ENCODE measurements at regions of chr6 and their contacts with region 1.

Region 1: GRCh38 chr6:157021344-157021992 is 244.3 kb downstream of the ARID1B start:
- DNase-seq: peak; percentile 85 to 93 (median 91)
- ATAC-seq: peak; percentile 90
- H3K4me3 ChIP-seq: peak overlapping the region; percentile 79
- H3K4me3 Mint-ChIP-seq: peak overlapping the region; percentile 76 to 98 (median 95)
- H3K27ac ChIP-seq: peak overlapping the region; percentile 100
- H3K27ac Mint-ChIP-seq: peak overlapping the region; percentile 86 to 100 (median 99)
- H3K4me1 ChIP-seq: peaks cover 5 to 21% of the 10 kb centered on the region in 2 donors
- H3K4me1 Mint-ChIP-seq: peaks cover 32 to 82% (median 64%) of the 10 kb centered on the region in 7 donors
- H3K27me3 ChIP-seq: no peaks in the 10 kb centered on the region
- H3K27me3 Mint-ChIP-seq: no peaks in the 10 kb centered on the region

Region 2: DNA sequence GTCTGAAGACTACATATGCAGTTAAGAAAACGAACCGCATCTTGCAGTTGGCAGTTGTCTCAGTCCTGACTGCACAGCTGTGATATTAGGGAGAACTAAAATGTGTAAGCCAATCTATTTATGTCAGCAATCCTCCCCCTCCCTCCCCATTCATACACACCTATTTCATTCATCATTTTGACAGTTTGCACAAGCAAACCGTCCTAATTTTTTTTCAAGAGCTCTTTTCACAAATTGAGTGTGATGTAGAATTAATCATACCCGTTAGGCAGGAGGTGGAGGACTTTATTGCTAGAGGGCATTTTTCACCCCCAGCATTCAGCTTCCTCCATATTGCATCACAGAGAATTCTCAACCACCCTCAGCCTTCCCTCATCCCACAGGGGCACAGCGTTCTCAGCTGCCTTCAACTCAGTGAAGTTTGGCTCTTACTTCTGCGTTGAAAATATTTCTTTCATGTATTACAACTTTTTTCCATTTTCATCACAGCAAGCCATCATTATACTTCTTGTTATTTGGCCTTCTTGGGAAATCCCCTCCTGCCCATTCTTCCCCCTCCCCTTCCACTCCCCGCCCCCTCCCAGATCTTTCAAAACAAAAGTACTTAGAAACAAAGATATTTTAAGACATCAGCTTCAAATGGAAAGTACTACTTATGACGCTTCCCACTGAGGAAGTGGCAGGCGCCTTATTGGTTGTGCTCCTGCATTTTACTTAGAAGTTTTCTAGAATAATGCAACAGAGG is 1603.3 kb before region 1 on chr6:
- CTCF ChIA-PET with region 1: no interaction called
- POLR2A ChIA-PET with region 1: no interaction called
- intact Hi-C with region 1: loop called in 1 of 2 experiments (anchors 2 kb)
- DNase-seq: peak; percentile 9 to 87 (median 68)
- ATAC-seq: peak; percentile 89
- H3K4me3 ChIP-seq: peak overlapping the region; percentile 44
- H3K4me3 Mint-ChIP-seq: peak overlapping the region; percentile 77 to 89 (median 84)
- H3K27ac ChIP-seq: peak overlapping the region; percentile 84
- H3K27ac Mint-ChIP-seq: peak overlapping the region; percentile 93 to 99 (median 97)
- H3K4me1 ChIP-seq: peaks cover 6 to 15% of the 10 kb centered on the region in 2 donors
- H3K4me1 Mint-ChIP-seq: peaks cover 22 to 50% (median 38%) of the 10 kb centered on the region in 7 donors
- H3K27me3 ChIP-seq: no peaks in the 10 kb centered on the region
- H3K27me3 Mint-ChIP-seq: no peaks in the 10 kb centered on the region

Region 3: GRCh38 chr6:156348424-156348823 is 673.0 kb before region 1 on chr6:
- CTCF ChIA-PET with region 1: no interaction called
- POLR2A ChIA-PET with region 1: no interaction called
- intact Hi-C with region 1: no loop called
- DNase-seq: no peak
- ATAC-seq: no peak
- H3K4me3 ChIP-seq: no peak overlapping the region
- H3K4me3 Mint-ChIP-seq: no peak overlapping the region
- H3K27ac ChIP-seq: no peak overlapping the region
- H3K27ac Mint-ChIP-seq: no peak overlapping the region
- H3K4me1 ChIP-seq: no peaks in the 10 kb centered on the region
- H3K4me1 Mint-ChIP-seq: peaks cover 0 to 6% (median 0%) of the 10 kb centered on the region in 7 donors
- H3K27me3 ChIP-seq: no peaks in the 10 kb centered on the region
- H3K27me3 Mint-ChIP-seq: peaks cover 0 to 7% (median 5%) of the 10 kb centered on the region in 5 donors

Region 4: GRCh38 chr6:156564127-156564806 is 457.2 kb before region 1 on chr6:
- CTCF ChIA-PET with region 1: interaction called, 4 read pairs
- POLR2A ChIA-PET with region 1: no interaction called
- intact Hi-C with region 1: loop called (anchors 1 kb)
- DNase-seq: peak; percentile 54 to 76 (median 65)
- ATAC-seq: peak; percentile 95
- H3K4me3 ChIP-seq: no peak overlapping the region
- H3K4me3 Mint-ChIP-seq: peak overlapping the region in 1 of 10 donors; percentile 34
- H3K27ac ChIP-seq: no peak overlapping the region
- H3K27ac Mint-ChIP-seq: peak overlapping the region in 4 of 9 donors; percentile 21 to 49 (median 32)
- H3K4me1 ChIP-seq: peaks cover 0 to 3% of the 10 kb centered on the region in 2 donors
- H3K4me1 Mint-ChIP-seq: peaks cover 5 to 13% (median 7%) of the 10 kb centered on the region in 7 donors
- H3K27me3 ChIP-seq: no peaks in the 10 kb centered on the region
- H3K27me3 Mint-ChIP-seq: peaks cover 0 to 11% (median 8%) of the 10 kb centered on the region in 5 donors

Region 5: DNA sequence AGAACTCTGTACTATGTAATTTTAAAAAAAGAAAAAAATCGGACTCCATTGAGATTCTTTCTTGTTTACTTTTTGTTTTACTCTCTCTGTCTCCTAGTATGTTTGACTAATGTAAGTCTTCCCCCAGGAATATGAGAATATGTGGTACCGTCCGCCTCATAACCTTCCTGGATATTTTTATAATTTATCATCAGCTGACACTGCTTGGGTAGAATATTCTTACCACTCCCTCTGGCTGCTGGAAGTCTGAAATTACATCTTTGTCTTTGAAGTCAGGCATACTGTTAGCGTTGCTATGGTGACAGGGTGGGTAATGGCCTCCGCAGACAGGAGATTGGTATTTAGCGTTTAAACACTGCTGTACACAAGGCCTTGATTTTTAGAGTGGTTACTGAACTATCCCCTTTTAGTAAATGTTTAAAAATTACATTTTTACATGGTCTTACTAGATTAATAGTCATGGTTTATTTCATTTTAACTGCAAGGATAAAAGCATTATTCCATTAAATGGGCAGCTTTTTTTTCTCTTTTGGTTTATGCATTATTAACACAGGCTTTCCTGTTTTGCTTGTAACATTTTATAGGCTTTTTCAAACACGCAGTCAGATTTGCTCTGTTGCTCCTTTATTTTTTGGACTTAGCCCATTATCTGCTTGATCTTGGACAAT is 67.9 kb before region 1 on chr6:
- CTCF ChIA-PET with region 1: no interaction called
- POLR2A ChIA-PET with region 1: interaction called, 7 read pairs
- intact Hi-C with region 1: loop called (anchors 1 kb)
- DNase-seq: peak in 7 of 9 donors; percentile 67 to 85 (median 82)
- ATAC-seq: peak; percentile 95
- H3K4me3 ChIP-seq: no peak overlapping the region
- H3K4me3 Mint-ChIP-seq: peak overlapping the region in 5 of 10 donors; percentile 10 to 51 (median 37)
- H3K27ac ChIP-seq: no peak overlapping the region
- H3K27ac Mint-ChIP-seq: peak overlapping the region in 8 of 9 donors; percentile 27 to 83 (median 51)
- H3K4me1 ChIP-seq: peaks cover 15 to 20% of the 10 kb centered on the region in 2 donors
- H3K4me1 Mint-ChIP-seq: peaks cover 41 to 84% (median 77%) of the 10 kb centered on the region in 7 donors
- H3K27me3 ChIP-seq: no peaks in the 10 kb centered on the region
- H3K27me3 Mint-ChIP-seq: no peaks in the 10 kb centered on the region

Region 6: DNA sequence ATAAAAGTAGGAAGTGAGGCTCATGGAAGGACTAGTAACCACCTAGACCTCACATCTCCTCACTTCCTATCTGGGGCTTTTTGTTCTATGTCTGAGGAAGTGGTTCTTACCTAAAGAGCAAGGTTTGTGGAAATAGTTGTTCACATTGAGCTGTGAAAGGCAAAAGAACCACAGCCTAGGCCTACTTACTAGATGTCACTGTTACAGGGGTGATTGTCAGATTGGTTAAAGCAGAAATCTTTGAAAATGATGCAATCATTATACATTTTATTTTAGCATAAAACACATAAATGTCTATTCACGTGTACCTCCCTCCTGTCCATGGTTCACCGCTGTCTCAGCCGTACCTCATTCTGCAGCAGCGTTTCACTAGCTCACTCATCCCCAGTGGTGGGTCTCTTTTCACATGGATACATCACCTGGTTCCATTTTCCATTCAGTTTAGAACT is 33.1 kb after region 1 on chr6:
- CTCF ChIA-PET with region 1: no interaction called
- POLR2A ChIA-PET with region 1: interaction called, 4 read pairs
- intact Hi-C with region 1: loop called in 1 of 2 experiments (anchors 1 kb)
- DNase-seq: peak in 7 of 9 donors; percentile 60 to 83 (median 78)
- ATAC-seq: peak; percentile 97
- H3K4me3 ChIP-seq: peak overlapping the region; percentile 19
- H3K4me3 Mint-ChIP-seq: peak overlapping the region; percentile 37 to 73 (median 58)
- H3K27ac ChIP-seq: peak overlapping the region; percentile 60
- H3K27ac Mint-ChIP-seq: peak overlapping the region; percentile 81 to 94 (median 88)
- H3K4me1 ChIP-seq: peaks cover 27 to 31% of the 10 kb centered on the region in 2 donors
- H3K4me1 Mint-ChIP-seq: peaks cover 34 to 73% (median 57%) of the 10 kb centered on the region in 7 donors
- H3K27me3 ChIP-seq: no peaks in the 10 kb centered on the region
- H3K27me3 Mint-ChIP-seq: no peaks in the 10 kb centered on the region

Region 7: DNA sequence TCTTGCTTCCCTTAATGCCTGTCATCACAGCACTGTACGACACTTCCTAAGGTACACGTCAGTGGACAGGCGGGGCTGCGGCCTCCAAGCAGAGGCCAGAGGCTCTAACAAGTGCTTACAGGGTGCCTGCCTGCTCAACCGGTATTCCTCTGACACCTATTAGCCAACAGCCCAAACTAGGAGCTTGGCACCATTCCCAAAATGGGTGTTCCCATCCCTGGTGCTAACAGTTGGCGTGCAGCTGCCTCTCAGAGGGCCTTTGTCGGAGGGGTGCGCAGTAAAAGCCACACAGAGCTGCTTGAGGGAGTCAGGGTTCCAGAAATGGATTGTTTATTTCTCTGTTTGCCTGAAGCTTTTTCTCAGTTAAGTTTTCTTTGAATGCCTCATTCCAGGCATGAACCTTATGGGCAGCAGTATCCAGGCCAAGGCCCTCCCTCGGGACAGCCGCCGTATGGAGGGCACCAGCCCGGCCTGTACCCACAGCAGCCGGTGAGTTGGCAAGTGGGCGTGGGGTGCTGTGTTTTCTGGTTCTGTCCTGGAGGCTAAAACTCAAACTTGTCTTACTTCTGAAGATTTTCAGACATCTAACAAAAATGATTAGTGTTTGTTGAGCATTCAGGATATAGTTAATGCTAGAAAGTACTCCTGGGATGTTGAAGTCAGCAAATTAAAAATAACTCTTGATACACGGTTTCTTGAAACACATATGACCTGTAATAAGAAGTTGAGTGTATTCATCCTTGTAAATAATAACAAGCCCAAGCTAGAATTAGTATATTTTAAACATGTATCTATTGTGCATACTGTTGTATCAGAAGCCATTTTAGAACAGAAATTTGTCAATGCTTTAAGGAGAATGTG is 177.2 kb after region 1 on chr6:
- CTCF ChIA-PET with region 1: no interaction called
- POLR2A ChIA-PET with region 1: no interaction called
- intact Hi-C with region 1: no loop called
- DNase-seq: no peak
- ATAC-seq: no peak
- H3K4me3 ChIP-seq: no peak overlapping the region
- H3K4me3 Mint-ChIP-seq: no peak overlapping the region
- H3K27ac ChIP-seq: no peak overlapping the region
- H3K27ac Mint-ChIP-seq: peak overlapping the region in 1 of 9 donors; percentile 75
- H3K4me1 ChIP-seq: peaks cover 7 to 9% of the 10 kb centered on the region in 2 donors
- H3K4me1 Mint-ChIP-seq: peaks cover 0 to 25% (median 15%) of the 10 kb centered on the region in 7 donors
- H3K27me3 ChIP-seq: no peaks in the 10 kb centered on the region
- H3K27me3 Mint-ChIP-seq: no peaks in the 10 kb centered on the region